ENCODE measurements at regions of chr7 and their contacts with region 1.

Region 1: DNA sequence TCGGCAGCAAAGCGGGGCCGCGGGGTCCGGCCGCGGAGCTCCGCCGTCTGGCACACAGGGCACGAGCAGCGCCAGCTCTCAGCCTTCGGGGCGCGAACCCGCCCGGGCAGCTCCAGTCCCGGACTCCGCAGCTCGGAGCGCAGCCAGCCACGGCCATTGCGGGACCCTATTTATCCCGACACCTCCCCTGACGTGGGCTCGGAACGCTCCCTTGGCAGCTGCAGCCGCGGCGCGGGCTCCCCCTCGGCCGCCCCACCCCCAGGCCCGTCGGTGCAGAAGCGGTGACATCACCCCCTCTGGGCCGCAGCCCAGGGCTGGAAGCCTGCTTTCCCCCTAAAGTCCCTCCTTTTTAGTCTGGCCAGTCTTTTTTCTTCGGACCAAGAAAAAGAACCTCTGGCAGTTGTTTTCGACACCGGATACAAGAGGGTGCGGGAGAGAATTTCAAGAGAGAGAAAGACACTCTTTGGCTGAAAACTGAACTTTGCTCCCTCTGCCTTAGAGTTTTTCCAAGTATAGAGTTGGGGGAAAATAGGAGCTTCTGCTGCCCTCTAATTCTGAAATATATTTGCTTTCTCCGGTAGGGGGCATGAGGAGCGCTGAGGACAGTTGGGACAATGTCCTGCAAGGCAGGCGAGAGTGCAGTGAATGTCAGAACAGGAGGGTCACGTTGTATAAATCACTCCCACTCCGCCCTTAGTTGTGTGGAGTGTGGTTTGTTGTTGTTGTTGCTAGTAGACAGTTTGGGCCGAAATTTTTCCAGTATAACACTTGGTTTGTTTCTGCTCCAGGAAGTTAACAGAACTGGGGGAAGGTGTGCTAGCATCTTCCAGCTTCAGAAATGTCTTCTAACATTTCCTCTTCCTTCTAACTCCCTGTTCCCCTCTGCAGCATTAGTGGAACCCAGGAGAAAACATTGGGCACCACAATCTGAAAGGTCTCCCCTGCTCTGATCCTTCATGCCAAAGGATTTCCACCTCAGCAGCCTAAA is at the start of gene SFRP4:
- DNase-seq: peak in 1 of 2 donors; percentile 45
- ATAC-seq: peak; percentile 45 to 61
- H3K4me3 ChIP-seq: peak within 1 kb of the TSS; percentile 58 to 67 (median 62)
- H3K27ac ChIP-seq: peak within 1 kb of the TSS; percentile 50 to 67 (median 62)
- H3K4me1 ChIP-seq: peaks cover 15 to 29% of the 10 kb centered on the region in 2 donors
- H3K27me3 ChIP-seq: no peaks in the 10 kb centered on the region
- CTCF ChIP-seq: peak; percentile 46 to 71 (median 62)
- POLR2A ChIP-seq: no peak
- total RNA-seq, gene SFRP4: 0.24 to 0.98 (median 0.71) TPM in 3 of 4 donors, not detected in the other

Region 2: GRCh38 chr7:38016567-38016966 is 99.6 kb after region 1 on chr7:
- in situ Hi-C with region 1: no loop called
- intact Hi-C with region 1: loop called (anchors 10 kb)
- DNase-seq: no peak
- ATAC-seq: no peak
- H3K4me3 ChIP-seq: no peak overlapping the region
- H3K27ac ChIP-seq: no peak overlapping the region
- H3K4me1 ChIP-seq: no peaks in the 10 kb centered on the region
- H3K27me3 ChIP-seq: no peaks in the 10 kb centered on the region
- CTCF ChIP-seq: no peak
- POLR2A ChIP-seq: no peak

Region 3: DNA sequence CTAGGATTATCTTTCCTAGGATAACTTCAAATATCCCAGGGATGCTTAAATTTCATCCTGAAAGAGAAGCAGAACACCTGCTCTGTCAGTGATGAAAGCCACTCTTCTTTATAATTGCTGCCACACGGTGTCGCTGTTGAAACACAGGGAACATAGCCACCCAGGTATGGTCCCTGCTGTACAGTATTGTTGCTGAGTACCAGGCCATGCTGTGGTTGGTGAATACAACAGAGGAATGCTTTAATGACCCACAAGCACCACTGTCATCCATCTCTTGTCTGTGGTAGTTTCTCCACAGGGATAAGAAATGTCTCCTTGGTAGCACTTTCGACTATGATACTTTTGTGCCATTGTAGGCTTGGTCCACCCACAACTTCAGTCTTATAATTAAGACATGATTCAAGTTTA is 190.5 kb after region 1 on chr7:
- in situ Hi-C with region 1: no loop called
- intact Hi-C with region 1: loop called (anchors 5 kb)
- DNase-seq: peak; percentile 19 to 21
- ATAC-seq: peak in 1 of 2 donors; percentile 66
- H3K4me3 ChIP-seq: no peak overlapping the region
- H3K27ac ChIP-seq: no peak overlapping the region
- H3K4me1 ChIP-seq: no peaks in the 10 kb centered on the region
- H3K27me3 ChIP-seq: no peaks in the 10 kb centered on the region
- CTCF ChIP-seq: peak; percentile 49 to 73 (median 66)
- POLR2A ChIP-seq: no peak

Region 4: DNA sequence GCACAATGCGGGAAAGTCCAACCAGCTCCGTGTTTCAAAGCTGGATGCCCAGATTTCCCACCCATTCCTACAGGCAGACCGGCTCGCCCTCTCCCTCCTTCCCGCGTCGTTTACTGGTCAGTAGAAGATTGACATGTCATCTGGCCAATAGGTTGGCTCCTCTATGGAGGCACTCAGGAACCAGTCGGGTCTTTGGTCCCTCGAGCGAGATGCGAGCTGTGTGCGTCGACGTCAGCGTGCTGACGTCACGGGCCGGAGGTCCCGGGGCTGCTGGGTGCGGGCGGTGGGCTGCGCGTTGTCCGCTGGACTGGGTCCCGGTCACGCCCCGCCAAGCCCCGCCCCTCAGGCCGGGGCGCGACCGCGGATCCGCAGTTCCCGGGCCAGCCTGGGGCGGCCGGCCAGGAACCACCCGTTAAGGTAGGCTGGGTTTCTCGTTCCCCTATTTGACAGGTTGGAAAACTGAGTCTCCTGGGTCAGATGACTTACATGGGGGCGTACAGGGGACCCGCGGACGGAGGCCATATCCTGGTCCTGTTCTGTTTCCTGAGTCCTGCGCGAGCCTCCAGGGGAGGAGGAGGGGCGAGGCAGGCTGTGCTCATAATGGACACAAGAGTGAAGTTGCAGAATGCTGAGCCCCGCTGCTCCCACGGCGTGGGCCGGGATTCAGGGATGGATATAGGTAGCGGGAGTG is 261.2 kb after region 1 on chr7 and contains the start of gene STARD3NL:
- in situ Hi-C with region 1: no loop called
- intact Hi-C with region 1: loop called (anchors 2 kb)
- DNase-seq: peak; percentile 98 to 99
- ATAC-seq: peak; percentile 99 to 100
- H3K4me3 ChIP-seq: peak within 1 kb of the TSS; percentile 66 to 96 (median 85)
- H3K27ac ChIP-seq: peak within 1 kb of the TSS; percentile 85 to 96 (median 89)
- H3K4me1 ChIP-seq: peaks cover 24 to 33% of the 10 kb centered on the region in 2 donors
- H3K27me3 ChIP-seq: no peaks in the 10 kb centered on the region
- CTCF ChIP-seq: peak in 2 of 5 experiments; percentile 5 to 32
- POLR2A ChIP-seq: peak; percentile 70 to 76
- total RNA-seq, gene STARD3NL: 18.1 to 22.0 (median 19.7) TPM

Region 5: DNA sequence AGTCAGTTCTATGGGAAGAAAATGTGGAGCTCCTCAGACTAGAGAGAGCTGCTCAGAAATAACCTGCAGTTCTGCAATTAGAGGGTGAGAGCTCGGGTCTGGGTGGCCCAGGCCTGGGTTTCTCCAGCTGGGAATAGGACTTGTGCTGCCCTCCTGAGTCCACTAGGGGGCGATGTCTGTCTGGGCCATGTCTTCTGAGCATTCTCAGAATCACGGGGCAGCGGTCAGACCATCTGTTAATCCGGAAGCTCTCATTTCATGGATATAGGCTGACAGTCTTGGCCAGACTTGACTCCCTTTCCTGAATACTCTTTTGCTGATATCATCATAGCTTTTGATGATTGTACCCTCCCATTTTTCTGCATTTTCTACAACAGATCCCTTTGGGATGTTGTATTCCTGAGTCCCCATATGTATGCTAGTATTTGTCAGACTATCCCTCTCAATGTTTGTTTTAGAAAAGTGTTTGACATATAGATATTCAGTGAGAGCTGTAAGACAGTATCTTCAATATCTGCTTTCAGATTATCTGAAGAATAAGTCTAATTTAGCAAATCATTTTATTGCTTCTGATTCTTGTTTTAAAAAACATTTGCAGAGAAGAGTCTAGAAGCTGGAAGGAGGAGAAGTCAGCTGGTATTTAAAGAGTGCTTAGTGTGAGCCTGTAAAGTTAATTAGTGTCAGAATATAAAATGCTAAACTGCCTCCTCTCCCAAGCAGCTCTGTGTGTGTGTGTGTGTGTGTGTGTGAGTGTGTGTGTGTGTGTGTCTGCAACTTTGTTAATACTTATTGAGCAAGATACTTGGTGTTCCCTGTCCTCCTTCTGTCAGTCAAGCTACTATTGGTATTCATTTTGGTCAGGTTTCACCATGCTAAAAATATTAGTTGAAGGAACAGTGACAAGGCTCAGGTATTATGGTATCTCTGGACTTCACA is 299.0 kb after region 1 on chr7:
- in situ Hi-C with region 1: loop called in 2 of 4 experiments (anchors 5 to 25 kb)
- intact Hi-C with region 1: loop called (anchors 5 kb)
- DNase-seq: peak; percentile 66 to 75
- ATAC-seq: peak; percentile 88 to 94
- H3K4me3 ChIP-seq: no peak overlapping the region
- H3K27ac ChIP-seq: peak overlapping the region; percentile 33 to 66 (median 42)
- H3K4me1 ChIP-seq: peaks cover 14 to 22% of the 10 kb centered on the region in 2 donors
- H3K27me3 ChIP-seq: no peaks in the 10 kb centered on the region
- CTCF ChIP-seq: peak; percentile 69 to 89 (median 84)
- POLR2A ChIP-seq: no peak

Region 6: GRCh38 chr7:38222481-38223096 is 305.6 kb after region 1 on chr7:
- in situ Hi-C with region 1: loop called in 2 of 4 experiments (anchors 5 to 25 kb)
- intact Hi-C with region 1: loop called (anchors 5 kb)
- DNase-seq: no peak
- ATAC-seq: peak; percentile 81 to 88
- H3K4me3 ChIP-seq: no peak overlapping the region
- H3K27ac ChIP-seq: peak overlapping the region in 2 of 4 donors; percentile 3
- H3K4me1 ChIP-seq: peaks cover 0 to 5% of the 10 kb centered on the region in 2 donors
- H3K27me3 ChIP-seq: no peaks in the 10 kb centered on the region
- CTCF ChIP-seq: peak; percentile 74 to 96 (median 89)
- POLR2A ChIP-seq: no peak

Region 7: DNA sequence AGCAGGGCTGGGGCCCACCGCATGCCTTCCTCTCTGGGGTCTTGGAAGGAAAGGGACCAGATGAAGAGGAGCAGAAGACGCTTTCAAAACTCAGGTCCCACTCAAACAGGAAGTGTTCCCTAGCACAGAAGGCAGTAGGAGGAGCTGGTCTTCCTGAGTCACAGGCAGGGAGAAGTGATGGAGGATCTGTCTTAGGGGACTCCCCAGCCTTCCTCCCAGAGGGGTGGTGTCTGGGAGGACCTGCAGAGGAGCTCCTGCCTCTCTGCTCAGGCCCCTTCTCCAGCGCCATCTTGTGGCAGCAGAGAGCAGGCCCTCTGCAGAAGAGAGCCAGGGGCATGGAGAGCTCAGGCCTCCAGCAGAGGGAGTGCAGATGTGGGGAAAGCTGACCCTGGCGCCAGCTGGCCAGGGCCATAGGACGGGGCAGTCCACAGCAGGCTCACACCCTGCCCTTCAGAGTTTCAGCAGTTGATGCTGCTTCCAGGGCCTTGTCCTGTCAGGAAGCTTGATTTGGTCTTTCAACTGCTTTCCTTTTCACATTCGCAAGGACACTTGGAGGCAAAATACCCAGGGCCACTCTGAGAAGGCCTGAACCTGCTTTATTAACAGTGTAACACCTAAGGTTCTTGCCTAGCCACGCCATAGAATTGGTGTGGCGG is 418.7 kb after region 1 on chr7:
- in situ Hi-C with region 1: loop called in 1 of 4 experiments (anchors 25 kb)
- intact Hi-C with region 1: no loop called
- DNase-seq: peak; percentile 40 to 63
- ATAC-seq: peak; percentile 55 to 65
- H3K4me3 ChIP-seq: no peak overlapping the region
- H3K27ac ChIP-seq: no peak overlapping the region
- H3K4me1 ChIP-seq: no peaks in the 10 kb centered on the region
- H3K27me3 ChIP-seq: no peaks in the 10 kb centered on the region
- CTCF ChIP-seq: peak in 4 of 5 experiments; percentile 28 to 67 (median 58)
- POLR2A ChIP-seq: no peak

Region 8: DNA sequence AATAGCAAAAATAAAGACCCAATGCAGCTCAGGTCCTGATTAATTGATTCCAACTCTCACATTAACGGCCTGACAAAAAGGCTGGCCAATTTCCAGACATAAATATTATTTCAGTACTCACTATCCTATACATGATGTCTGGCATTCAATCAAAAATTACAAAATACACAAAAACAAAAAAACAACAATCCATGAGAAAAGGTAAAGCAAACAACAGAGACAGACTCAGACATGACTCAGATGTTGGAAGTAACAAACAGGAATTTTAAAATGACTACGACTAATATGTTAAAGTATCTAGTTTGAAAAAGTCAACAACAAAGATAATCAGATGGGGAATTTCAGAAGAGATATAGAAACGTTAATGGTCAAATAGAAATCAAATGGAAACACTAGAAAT is 561.4 kb after region 1 on chr7:
- in situ Hi-C with region 1: no loop called
- intact Hi-C with region 1: no loop called
- DNase-seq: no peak
- ATAC-seq: no peak
- H3K4me3 ChIP-seq: no peak overlapping the region
- H3K27ac ChIP-seq: peak overlapping the region in 2 of 4 donors; percentile 38 to 50
- H3K4me1 ChIP-seq: no peaks in the 10 kb centered on the region
- H3K27me3 ChIP-seq: no peaks in the 10 kb centered on the region
- CTCF ChIP-seq: no peak
- POLR2A ChIP-seq: no peak